ENCODE measurements at regions of chr16 and their contacts with region 1.

Region 1: GRCh38 chr16:813204-813915 is 12.8 kb upstream of the GNG13 start:
- DNase-seq: peak; percentile 50
- ATAC-seq: peak; percentile 83
- H3K4me3 Mint-ChIP-seq: no peak overlapping the region
- H3K27ac Mint-ChIP-seq: no peak overlapping the region
- H3K4me1 Mint-ChIP-seq: peaks cover 6% of the 10 kb centered on the region
- H3K27me3 Mint-ChIP-seq: peaks cover 24% of the 10 kb centered on the region
- CTCF ChIP-seq: no peak

Region 2: DNA sequence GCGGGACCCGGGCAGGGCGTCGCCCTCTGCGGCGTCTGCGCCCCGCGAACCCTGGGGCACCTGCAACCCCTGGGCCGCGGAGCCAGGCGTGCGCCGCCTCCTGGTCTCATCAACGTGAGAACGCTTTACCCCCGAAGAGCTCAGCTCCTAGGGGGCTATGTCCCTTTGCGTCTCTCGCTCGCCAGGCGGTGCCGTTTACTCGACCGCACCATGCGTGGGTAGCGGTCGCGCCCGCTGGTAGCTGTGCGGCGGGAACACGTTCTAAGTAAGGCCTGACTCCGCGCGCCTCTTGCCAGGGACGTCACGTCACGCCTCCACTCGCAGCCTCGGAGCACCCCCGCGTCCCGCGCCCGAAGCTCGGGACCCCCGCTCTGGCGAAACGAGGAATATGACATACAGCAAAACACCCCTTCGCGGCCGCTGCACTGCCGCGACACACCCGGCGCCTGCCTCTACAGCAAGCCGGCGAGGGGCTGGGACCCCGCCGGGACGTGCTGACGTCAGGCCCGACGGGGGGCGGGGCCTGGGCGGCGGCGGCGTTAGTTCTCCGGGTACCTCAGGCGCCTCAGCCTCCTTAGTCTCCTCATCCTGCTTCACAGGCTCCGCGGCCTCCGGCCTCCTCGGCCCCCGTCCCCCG is 388.2 kb before region 1 on chr16 and contains the start of gene RAB11FIP3:
- CTCF ChIA-PET with region 1: no interaction called
- POLR2A ChIA-PET with region 1: no interaction called
- intact Hi-C with region 1: no loop called
- DNase-seq: peak; percentile 93
- ATAC-seq: peak; percentile 92
- H3K4me3 Mint-ChIP-seq: peak within 1 kb of the TSS; percentile 89
- H3K27ac Mint-ChIP-seq: peak within 1 kb of the TSS; percentile 82
- H3K4me1 Mint-ChIP-seq: peaks cover 30% of the 10 kb centered on the region
- H3K27me3 Mint-ChIP-seq: no peaks in the 10 kb centered on the region
- CTCF ChIP-seq: no peak
- total RNA-seq, gene RAB11FIP3: 32.2 and 35.4 TPM in 2 replicates

Region 3: GRCh38 chr16:825341-826061 is 12.1 kb after region 1 on chr16:
- CTCF ChIA-PET with region 1: no interaction called
- POLR2A ChIA-PET with region 1: no interaction called
- intact Hi-C with region 1: no loop called
- DNase-seq: no peak
- ATAC-seq: no peak
- H3K4me3 Mint-ChIP-seq: no peak overlapping the region
- H3K27ac Mint-ChIP-seq: no peak overlapping the region
- H3K4me1 Mint-ChIP-seq: peaks cover 3% of the 10 kb centered on the region
- H3K27me3 Mint-ChIP-seq: peaks cover 14% of the 10 kb centered on the region
- CTCF ChIP-seq: no peak

Region 4: DNA sequence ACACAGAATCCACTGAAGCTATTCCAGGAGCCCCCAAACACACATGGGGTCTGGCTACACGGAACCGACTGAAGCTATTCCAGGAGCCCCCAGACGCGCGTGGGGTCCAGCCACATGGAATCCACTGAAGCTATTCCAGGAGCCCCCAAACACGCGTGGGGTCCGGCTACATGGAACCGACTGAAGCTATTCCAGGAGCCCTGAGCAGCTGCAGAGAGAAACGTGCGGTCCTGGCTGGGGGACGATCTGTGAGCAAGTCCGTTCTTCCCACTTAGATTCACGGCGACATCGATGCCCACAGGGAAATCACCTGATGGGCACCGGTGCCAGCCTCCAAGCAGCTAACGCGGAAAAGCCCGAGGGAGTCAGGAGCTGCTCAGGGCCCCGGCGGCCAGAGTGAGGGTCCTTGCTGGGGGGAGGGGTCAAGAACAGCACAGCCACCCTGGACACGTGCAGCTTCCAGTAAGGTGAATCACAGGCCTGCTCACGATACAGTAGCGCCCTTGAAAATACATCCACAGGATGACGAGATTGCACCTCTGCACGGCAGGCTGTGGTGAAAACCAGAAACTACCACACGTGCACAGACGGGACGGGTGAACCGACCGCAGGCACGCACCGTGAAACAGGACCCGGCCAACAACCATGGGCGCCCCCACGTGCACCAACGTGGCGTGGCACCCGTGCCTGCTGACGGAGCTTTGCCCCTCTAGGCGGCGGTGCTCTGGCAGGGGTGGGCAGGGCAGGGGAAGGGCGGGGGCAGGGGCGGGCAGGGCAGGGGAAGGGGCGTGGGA is 64.8 kb after region 1 on chr16:
- CTCF ChIA-PET with region 1: no interaction called
- POLR2A ChIA-PET with region 1: no interaction called
- intact Hi-C with region 1: loop called (anchors 5 kb)
- DNase-seq: no peak
- ATAC-seq: peak; percentile 45
- H3K4me3 Mint-ChIP-seq: no peak overlapping the region
- H3K27ac Mint-ChIP-seq: no peak overlapping the region
- H3K4me1 Mint-ChIP-seq: peaks cover 15% of the 10 kb centered on the region
- H3K27me3 Mint-ChIP-seq: no peaks in the 10 kb centered on the region
- CTCF ChIP-seq: no peak

Region 5: GRCh38 chr16:1102921-1103635 is 289.7 kb after region 1 on chr16:
- CTCF ChIA-PET with region 1: no interaction called
- POLR2A ChIA-PET with region 1: interaction called, 3 read pairs
- intact Hi-C with region 1: loop called (anchors 1 kb)
- DNase-seq: peak; percentile 77
- ATAC-seq: peak; percentile 91
- H3K4me3 Mint-ChIP-seq: no peak overlapping the region
- H3K27ac Mint-ChIP-seq: no peak overlapping the region
- H3K4me1 Mint-ChIP-seq: no peaks in the 10 kb centered on the region
- H3K27me3 Mint-ChIP-seq: peaks cover 9% of the 10 kb centered on the region
- CTCF ChIP-seq: no peak

Region 6: DNA sequence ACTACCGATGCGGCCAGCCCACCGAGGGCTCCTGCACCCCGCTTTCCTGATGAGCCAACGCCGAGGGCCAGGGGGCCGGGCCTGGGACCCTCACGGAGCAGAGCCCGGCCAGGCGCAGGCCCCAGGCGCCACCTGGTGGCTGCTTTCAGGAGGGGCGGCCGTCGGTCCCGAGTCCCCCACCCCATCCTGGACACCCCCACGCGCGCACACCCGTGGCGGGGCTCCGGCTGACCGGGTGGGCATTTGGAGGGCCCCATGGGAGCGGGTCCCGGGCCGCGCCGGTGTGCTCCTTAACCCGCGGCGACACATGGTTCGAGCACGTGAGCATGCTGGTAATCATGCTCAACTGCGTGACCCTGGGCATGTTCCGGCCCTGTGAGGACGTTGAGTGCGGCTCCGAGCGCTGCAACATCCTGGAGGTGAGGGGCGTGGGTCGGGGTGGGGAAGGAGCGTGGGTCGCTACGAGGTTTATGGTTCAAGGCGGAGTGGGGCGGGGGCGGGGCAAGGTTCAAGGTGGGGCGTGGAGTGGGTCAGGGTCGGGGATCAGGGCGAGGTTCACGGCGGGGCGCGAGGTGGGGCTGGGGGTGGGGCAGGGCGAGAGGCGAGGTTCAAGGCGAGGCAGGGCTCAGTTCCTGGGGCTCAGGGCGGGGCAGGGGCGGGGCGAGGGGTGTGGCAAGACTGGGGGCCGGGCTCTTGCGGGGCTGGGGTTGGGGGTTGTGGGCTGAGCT is 381.5 kb after region 1 on chr16:
- CTCF ChIA-PET with region 1: no interaction called
- POLR2A ChIA-PET with region 1: no interaction called
- intact Hi-C with region 1: loop called (anchors 2 kb)
- DNase-seq: peak; percentile 29
- ATAC-seq: no peak
- H3K4me3 Mint-ChIP-seq: no peak overlapping the region
- H3K27ac Mint-ChIP-seq: no peak overlapping the region
- H3K4me1 Mint-ChIP-seq: no peaks in the 10 kb centered on the region
- H3K27me3 Mint-ChIP-seq: peaks cover 3% of the 10 kb centered on the region
- CTCF ChIP-seq: no peak

Measured in activated B cell treated with CpG ODN at 0.5 μM for 24 hours (primary cell).